HepG2 (cell line): ENCODE measurements at regions of chr10 and their contacts with region 1.

Region 1: DNA sequence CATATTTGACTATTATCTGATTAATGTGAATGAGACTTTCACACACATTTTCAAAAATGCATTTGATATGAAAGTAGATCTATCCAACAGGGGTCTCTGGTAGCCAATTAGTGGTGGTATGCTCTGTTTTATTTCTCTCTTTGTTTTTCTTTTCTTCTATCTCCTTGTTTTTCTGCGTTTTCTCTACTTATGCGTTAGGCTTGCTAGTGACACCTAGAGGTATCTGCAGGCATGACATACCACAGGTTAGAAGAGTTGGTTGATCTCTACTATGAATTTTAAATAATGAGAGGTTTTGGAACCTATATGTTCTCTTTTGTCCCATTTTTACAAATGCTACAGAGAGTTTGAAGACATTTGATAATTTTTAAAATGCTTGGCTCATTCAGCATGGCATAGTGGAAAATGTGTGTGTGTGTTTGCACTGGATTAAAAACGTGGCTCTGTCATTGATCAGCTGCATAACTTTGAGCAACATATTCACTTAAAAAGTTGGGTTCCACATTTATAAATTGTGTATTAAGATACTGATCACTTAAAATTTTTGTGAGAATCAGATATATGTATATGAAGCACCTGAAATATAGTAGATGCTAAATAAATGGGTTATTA is 28.1 kb upstream of the PLXDC2 start:
- DNase-seq: peak; percentile 61
- ATAC-seq: peak; percentile 72
- H3K4me3 ChIP-seq: no peak overlapping the region
- H3K27ac ChIP-seq: no peak overlapping the region
- H3K4me1 ChIP-seq: peaks cover 7% of the 10 kb centered on the region
- H3K27me3 ChIP-seq: no peaks in the 10 kb centered on the region
- CTCF ChIP-seq: peak; percentile 72
- EP300 ChIP-seq: no peak
- POLR2A ChIP-seq: no peak
- RAD21 ChIP-seq: no peak

Region 2: DNA sequence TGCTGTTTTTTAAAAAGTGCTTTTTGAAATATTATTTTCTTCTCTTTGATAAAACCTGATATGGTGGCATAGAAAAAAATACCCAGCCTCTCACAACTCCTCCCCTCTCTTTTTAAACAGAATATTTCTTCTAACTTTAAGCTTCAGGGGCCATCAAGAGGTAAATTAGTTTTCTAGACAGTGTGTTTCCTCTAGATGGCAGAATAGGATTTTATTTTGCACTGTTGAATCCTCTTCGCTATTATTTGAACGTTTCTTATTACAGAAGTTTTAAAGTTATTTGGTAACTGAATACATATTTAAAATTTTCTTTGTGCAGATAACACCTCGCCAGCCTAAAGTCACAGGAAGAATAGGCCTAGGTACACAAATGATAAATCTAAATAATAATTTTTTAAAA is 1098.7 kb before region 1 on chr10:
- CTCF ChIA-PET with region 1: interaction called, 3 read pairs
- POLR2A ChIA-PET with region 1: no interaction called
- in situ Hi-C with region 1: loop called (anchors 25 kb)
- intact Hi-C with region 1: loop called (anchors 1 kb)
- DNase-seq: peak; percentile 24
- ATAC-seq: peak; percentile 44; the same call in 2 of the 3 replicates
- H3K4me3 ChIP-seq: no peak overlapping the region
- H3K27ac ChIP-seq: no peak overlapping the region
- H3K4me1 ChIP-seq: peaks cover 11% of the 10 kb centered on the region
- H3K27me3 ChIP-seq: no peaks in the 10 kb centered on the region
- CTCF ChIP-seq: peak; percentile 55
- EP300 ChIP-seq: no peak
- POLR2A ChIP-seq: no peak
- RAD21 ChIP-seq: 0 out of 2 replicates have a peak, but pooled peaks have one; percentile 16

Region 3: DNA sequence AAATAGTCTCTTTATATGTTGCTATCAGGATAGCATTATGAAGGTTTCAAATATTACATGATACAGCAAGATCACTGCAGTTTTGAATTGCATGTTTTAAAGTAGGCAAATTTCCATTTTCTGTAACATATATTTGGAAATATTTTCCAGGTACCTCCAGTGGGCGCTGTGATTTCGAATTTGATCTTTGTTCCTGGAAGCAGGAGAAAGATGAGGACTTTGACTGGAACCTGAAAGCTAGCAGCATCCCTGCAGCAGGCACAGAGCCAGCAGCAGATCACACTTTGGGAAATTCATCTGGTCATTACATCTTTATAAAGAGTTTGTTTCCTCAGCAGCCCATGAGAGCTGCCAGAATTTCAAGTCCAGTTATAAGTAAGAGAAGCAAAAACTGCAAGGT is 440.6 kb before region 1 on chr10:
- CTCF ChIA-PET with region 1: interaction called, 3 read pairs
- POLR2A ChIA-PET with region 1: no interaction called
- in situ Hi-C with region 1: no loop called
- intact Hi-C with region 1: loop called (anchors 10 kb)
- DNase-seq: peak; percentile 4
- ATAC-seq: 0 out of 3 replicates have a peak, but pooled peaks have one; percentile 28
- H3K4me3 ChIP-seq: no peak overlapping the region
- H3K27ac ChIP-seq: no peak overlapping the region
- H3K4me1 ChIP-seq: no peaks in the 10 kb centered on the region
- H3K27me3 ChIP-seq: no peaks in the 10 kb centered on the region
- CTCF ChIP-seq: peak; percentile 45
- EP300 ChIP-seq: no peak
- POLR2A ChIP-seq: no peak
- RAD21 ChIP-seq: no peak

Region 4: GRCh38 chr10:19412531-19412930 is 375.6 kb before region 1 on chr10:
- CTCF ChIA-PET with region 1: no interaction called
- POLR2A ChIA-PET with region 1: no interaction called
- in situ Hi-C with region 1: no loop called
- intact Hi-C with region 1: loop called (anchors 1 kb)
- DNase-seq: peak; percentile 16
- ATAC-seq: peak; percentile 45; the same call in 1 of the 3 replicates
- H3K4me3 ChIP-seq: no peak overlapping the region
- H3K27ac ChIP-seq: no peak overlapping the region
- H3K4me1 ChIP-seq: no peaks in the 10 kb centered on the region
- H3K27me3 ChIP-seq: no peaks in the 10 kb centered on the region
- CTCF ChIP-seq: peak; percentile 48
- EP300 ChIP-seq: no peak
- POLR2A ChIP-seq: no peak
- RAD21 ChIP-seq: no peak

Region 5: GRCh38 chr10:19638182-19638895 is 149.8 kb before region 1 on chr10:
- CTCF ChIA-PET with region 1: no interaction called
- POLR2A ChIA-PET with region 1: no interaction called
- in situ Hi-C with region 1: no loop called
- intact Hi-C with region 1: loop called (anchors 10 kb)
- DNase-seq: peak; percentile 66
- ATAC-seq: peak; percentile 92
- H3K4me3 ChIP-seq: peak overlapping the region in 2 of 3 experiments; percentile 6 to 32; a peak in 3 of 6 replicates
- H3K27ac ChIP-seq: peak overlapping the region; percentile 1
- H3K4me1 ChIP-seq: peaks cover 19% of the 10 kb centered on the region
- H3K27me3 ChIP-seq: no peaks in the 10 kb centered on the region
- CTCF ChIP-seq: no peak
- EP300 ChIP-seq: no peak
- POLR2A ChIP-seq: no peak
- RAD21 ChIP-seq: no peak

Region 6: GRCh38 chr10:19719284-19719683 is 68.9 kb before region 1 on chr10:
- CTCF ChIA-PET with region 1: no interaction called
- POLR2A ChIA-PET with region 1: no interaction called
- in situ Hi-C with region 1: no loop called
- intact Hi-C with region 1: no loop called
- DNase-seq: no peak
- ATAC-seq: no peak
- H3K4me3 ChIP-seq: no peak overlapping the region
- H3K27ac ChIP-seq: no peak overlapping the region
- H3K4me1 ChIP-seq: no peaks in the 10 kb centered on the region
- H3K27me3 ChIP-seq: no peaks in the 10 kb centered on the region; a peak in 1 of 5 replicates
- CTCF ChIP-seq: no peak
- EP300 ChIP-seq: no peak
- POLR2A ChIP-seq: no peak
- RAD21 ChIP-seq: no peak

Region 7: GRCh38 chr10:19811540-19811939 is 23.4 kb after region 1 on chr10:
- CTCF ChIA-PET with region 1: no interaction called
- POLR2A ChIA-PET with region 1: no interaction called
- in situ Hi-C with region 1: no loop called
- intact Hi-C with region 1: no loop called
- DNase-seq: peak; percentile 13
- ATAC-seq: peak; percentile 69
- H3K4me3 ChIP-seq: no peak overlapping the region
- H3K27ac ChIP-seq: no peak overlapping the region
- H3K4me1 ChIP-seq: peaks cover 3% of the 10 kb centered on the region; the same call in 1 of the 2 replicates
- H3K27me3 ChIP-seq: peaks cover 0 to 11% of the 10 kb centered on the region in 2 experiments; a peak in 2 of 5 replicates
- CTCF ChIP-seq: peak; percentile 14; the same call in 1 of the 2 replicates
- EP300 ChIP-seq: no peak
- POLR2A ChIP-seq: no peak
- RAD21 ChIP-seq: no peak